ENCODE measurements at regions of chr1 and their contacts with region 1.

Region 1: GRCh38 chr1:234309598-234310459 is 63.4 kb upstream of the COA6 start:
- DNase-seq: peak; percentile 84
- ATAC-seq: peak; percentile 97
- H3K4me3 Mint-ChIP-seq: no peak overlapping the region
- H3K27ac Mint-ChIP-seq: no peak overlapping the region
- H3K4me1 Mint-ChIP-seq: peaks cover 16% of the 10 kb centered on the region
- H3K27me3 Mint-ChIP-seq: peaks cover 5% of the 10 kb centered on the region
- CTCF ChIP-seq: peak; percentile 88

Region 2: DNA sequence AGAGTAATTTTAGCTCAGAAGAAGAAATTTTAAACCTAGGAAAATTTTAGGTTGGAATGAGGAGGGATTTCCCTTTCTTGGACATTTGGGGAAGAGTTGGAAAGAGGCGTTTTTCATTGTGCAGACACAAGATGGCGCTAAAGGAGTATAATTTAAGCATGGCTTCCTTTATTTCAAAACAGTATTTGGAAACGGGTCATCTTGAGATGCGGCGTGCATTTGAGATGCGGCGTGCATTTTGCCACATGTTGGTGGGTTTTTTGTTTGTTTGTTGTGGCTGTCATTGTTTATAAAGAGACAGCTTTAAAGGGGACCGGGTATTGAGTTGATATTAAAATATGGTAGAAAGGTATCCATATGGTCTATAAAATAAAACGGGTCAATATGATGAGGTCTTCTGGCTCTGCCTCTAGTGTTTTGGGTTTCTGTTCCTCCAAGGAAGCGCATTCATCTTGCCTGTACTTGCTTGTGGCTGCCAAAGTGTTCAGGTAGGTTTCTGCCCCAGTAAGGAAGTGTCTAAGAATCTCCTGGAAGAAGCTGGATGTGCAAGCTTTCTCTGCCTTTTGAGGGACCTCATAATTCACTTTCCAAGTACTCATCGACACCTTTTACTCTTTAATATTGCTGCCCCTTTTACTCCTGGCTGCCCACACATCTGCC is 195.1 kb before region 1 on chr1:
- CTCF ChIA-PET with region 1: interaction called, 74 read pairs
- POLR2A ChIA-PET with region 1: no interaction called
- intact Hi-C with region 1: no loop called
- DNase-seq: peak; percentile 38
- ATAC-seq: peak; percentile 58
- H3K4me3 Mint-ChIP-seq: peak overlapping the region; percentile 14
- H3K27ac Mint-ChIP-seq: no peak overlapping the region
- H3K4me1 Mint-ChIP-seq: peaks cover 4% of the 10 kb centered on the region
- H3K27me3 Mint-ChIP-seq: peaks cover 14% of the 10 kb centered on the region
- CTCF ChIP-seq: peak; percentile 81

Region 3: DNA sequence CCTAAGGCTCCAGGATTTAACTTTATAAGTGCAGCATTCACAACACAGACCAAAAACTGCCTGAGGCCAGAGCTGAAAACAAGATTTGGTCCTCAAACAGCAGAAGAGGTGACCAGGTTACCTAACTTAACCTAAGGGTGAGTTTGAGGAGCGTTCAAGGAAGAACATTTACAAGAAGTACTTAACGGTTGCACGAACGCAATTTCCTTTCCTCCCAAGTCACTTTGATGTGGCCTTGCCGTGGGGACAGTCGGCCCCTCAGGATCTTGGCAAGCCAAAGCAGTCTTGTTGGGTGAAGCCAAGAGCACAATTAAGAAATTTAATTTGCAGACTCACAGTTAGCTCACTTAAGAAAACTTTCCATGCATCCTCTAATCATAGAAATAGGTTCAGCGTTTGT is 139.2 kb before region 1 on chr1:
- CTCF ChIA-PET with region 1: interaction called, 10 read pairs
- POLR2A ChIA-PET with region 1: no interaction called
- intact Hi-C with region 1: no loop called
- DNase-seq: peak; percentile 54
- ATAC-seq: peak; percentile 72
- H3K4me3 Mint-ChIP-seq: no peak overlapping the region
- H3K27ac Mint-ChIP-seq: peak overlapping the region; percentile 75
- H3K4me1 Mint-ChIP-seq: peaks cover 17% of the 10 kb centered on the region
- H3K27me3 Mint-ChIP-seq: peaks cover 11% of the 10 kb centered on the region
- CTCF ChIP-seq: no peak

Region 4: DNA sequence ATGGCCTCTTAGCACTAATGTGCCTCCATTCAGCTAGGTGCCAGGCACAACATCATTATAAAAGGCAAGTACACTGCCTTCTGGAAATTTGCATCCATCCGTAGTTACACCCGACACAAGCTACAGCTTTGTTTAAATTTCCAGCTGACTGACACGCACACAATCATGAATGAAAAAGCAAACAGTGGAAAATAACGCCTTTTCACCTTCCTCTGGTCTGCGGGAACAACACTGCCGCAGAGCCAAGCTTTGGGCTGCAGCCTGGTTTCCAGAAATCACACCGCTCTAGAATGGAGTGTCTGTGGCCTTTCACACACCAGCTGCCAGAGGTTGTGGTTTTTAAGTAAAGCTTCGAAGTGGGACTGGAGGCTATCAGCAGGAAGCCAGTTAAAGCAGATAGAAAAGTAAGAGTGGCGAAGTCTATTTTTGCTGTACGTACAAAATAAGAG is 79.4 kb before region 1 on chr1:
- CTCF ChIA-PET with region 1: interaction called, 17 read pairs
- POLR2A ChIA-PET with region 1: no interaction called
- intact Hi-C with region 1: no loop called
- DNase-seq: peak; percentile 48
- ATAC-seq: peak; percentile 82
- H3K4me3 Mint-ChIP-seq: no peak overlapping the region
- H3K27ac Mint-ChIP-seq: peak overlapping the region; percentile 1
- H3K4me1 Mint-ChIP-seq: peaks cover 8% of the 10 kb centered on the region
- H3K27me3 Mint-ChIP-seq: peaks cover 30% of the 10 kb centered on the region
- CTCF ChIP-seq: no peak

Region 5: GRCh38 chr1:234288946-234289345 is 20.9 kb before region 1 on chr1:
- CTCF ChIA-PET with region 1: interaction called, 27 read pairs
- POLR2A ChIA-PET with region 1: no interaction called
- intact Hi-C with region 1: no loop called
- DNase-seq: no peak
- ATAC-seq: no peak
- H3K4me3 Mint-ChIP-seq: no peak overlapping the region
- H3K27ac Mint-ChIP-seq: no peak overlapping the region
- H3K4me1 Mint-ChIP-seq: no peaks in the 10 kb centered on the region
- H3K27me3 Mint-ChIP-seq: peaks cover 13% of the 10 kb centered on the region
- CTCF ChIP-seq: no peak

Region 6: GRCh38 chr1:234326497-234327366 is 16.9 kb after region 1 on chr1:
- CTCF ChIA-PET with region 1: interaction called, 60 read pairs
- POLR2A ChIA-PET with region 1: interaction called, 3 read pairs
- intact Hi-C with region 1: no loop called
- DNase-seq: peak; percentile 75
- ATAC-seq: peak; percentile 90
- H3K4me3 Mint-ChIP-seq: peak overlapping the region; percentile 59
- H3K27ac Mint-ChIP-seq: no peak overlapping the region
- H3K4me1 Mint-ChIP-seq: peaks cover 6% of the 10 kb centered on the region
- H3K27me3 Mint-ChIP-seq: peaks cover 43% of the 10 kb centered on the region
- CTCF ChIP-seq: peak; percentile 74

Region 7: DNA sequence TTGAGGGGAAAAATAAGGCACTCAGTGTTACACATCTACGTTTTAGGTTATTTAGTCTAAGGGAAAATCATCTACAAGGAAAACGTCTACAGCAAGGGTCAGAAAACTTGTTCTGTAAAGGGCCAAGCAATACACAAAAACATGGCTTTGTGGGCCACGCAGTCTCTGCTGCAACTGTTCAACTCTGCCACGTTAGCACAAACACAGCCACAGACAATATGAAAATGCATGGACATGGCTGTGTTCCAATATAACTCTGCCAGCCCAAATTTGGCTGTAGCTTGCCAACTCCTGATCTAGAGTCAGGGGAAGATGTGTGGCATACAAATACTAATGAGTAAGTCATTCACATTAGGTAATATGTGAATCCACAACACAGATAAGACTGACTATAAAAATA is 104.2 kb after region 1 on chr1:
- CTCF ChIA-PET with region 1: no interaction called
- POLR2A ChIA-PET with region 1: no interaction called
- intact Hi-C with region 1: no loop called
- DNase-seq: no peak
- ATAC-seq: no peak
- H3K4me3 Mint-ChIP-seq: no peak overlapping the region
- H3K27ac Mint-ChIP-seq: no peak overlapping the region
- H3K4me1 Mint-ChIP-seq: peaks cover 3% of the 10 kb centered on the region
- H3K27me3 Mint-ChIP-seq: no peaks in the 10 kb centered on the region
- CTCF ChIP-seq: no peak

Measured in activated CD8-positive, alpha-beta T cell treated with anti-CD3 and anti-CD28 coated beads for 36 hours (primary cell).